ENCODE measurements at regions of chr2 and their contacts with region 1.

Region 1: GRCh38 chr2:86753606-86754005 is 33.5 kb downstream of the RMND5A start:
- DNase-seq: no peak

Region 2: DNA sequence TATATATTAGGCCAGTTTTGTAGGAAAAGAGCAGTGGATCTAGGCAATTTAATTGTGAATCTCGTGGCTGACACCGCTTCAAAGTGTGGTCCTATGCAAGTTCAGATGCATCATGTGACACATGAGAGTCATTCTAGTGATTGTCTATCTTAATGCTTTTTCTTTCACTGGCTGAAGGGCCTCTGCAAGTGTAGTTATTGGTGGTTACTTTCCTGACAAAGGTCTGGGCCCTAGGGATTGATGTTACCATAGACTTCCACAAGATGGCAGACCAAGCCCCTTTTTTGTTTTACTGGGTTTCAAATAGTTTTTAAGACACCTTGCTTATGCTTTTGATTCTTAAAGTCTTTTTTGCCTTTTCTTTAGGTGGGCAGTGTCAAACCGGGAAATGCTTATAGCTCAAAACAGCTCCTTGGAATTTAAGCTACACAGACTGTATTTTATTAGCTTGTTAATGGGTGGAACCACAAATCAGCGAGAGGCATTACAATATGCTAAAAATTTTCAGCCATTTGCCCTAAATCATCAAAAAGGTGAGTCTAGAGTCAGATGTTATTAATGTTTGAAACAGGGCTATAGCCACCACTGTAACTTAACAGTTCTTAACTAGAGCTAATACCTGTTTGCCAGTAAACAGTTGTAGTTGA is 11.2 kb after region 1 on chr2:
- CTCF ChIA-PET with region 1: interaction called, 10 read pairs
- POLR2A ChIA-PET with region 1: no interaction called
- DNase-seq: peak; percentile 60

Region 3: DNA sequence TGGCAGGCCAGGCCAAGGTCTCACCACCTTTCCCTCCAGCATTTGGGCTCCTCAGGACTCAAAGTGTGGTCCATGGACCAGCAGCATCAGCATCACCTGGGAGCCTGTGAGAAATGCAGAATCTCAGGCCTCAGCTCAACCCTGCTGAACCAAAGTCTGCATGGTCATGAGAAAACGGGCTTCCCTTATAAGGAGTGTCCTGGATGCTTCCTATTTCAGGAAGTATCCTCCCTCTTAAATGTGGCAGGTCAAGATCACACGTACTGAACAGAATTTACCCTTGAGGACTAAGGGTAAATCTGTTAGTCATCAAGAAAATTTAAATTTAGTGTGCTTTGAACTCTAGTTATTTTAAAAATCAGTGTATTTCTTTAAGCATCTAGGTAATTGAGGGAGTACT is 25.4 kb after region 1 on chr2:
- CTCF ChIA-PET with region 1: no interaction called
- POLR2A ChIA-PET with region 1: no interaction called
- DNase-seq: no peak

Measured in HEK293T (cell line).